GM12878 (cell line): ENCODE measurements at regions of chr17 and their contacts with region 1.

Region 1: DNA sequence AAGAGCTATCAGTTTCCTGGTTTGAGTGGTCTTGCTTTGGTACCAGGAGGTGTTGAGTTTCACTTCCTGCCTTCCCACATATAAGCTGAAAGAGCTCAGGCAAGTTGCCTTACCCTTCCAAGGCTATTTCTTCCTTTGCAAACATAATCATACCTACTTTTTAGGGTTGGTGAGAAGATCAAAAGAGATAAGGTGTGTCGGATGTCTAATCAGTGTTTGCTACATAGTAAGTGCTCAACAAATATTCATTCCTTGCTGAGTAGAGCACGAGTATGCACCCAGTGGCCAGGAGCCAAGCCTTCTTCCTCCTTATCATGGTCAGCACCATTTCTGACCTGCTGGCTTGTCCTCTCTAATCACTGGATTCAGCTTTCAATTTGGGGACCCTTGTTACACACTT is 12.7 kb upstream of the TMEM98 start:
- DNase-seq: no peak
- ATAC-seq: no peak
- H3K4me3 ChIP-seq: no peak overlapping the region
- H3K27ac ChIP-seq: no peak overlapping the region
- H3K4me1 ChIP-seq: no peaks in the 10 kb centered on the region
- H3K27me3 ChIP-seq: no peaks in the 10 kb centered on the region
- CTCF ChIP-seq: no peak
- EP300 ChIP-seq: no peak
- POLR2A ChIP-seq: no peak
- RAD21 ChIP-seq: no peak

Region 2: GRCh38 chr17:32903774-32904673 is 11.2 kb before region 1 on chr17:
- CTCF ChIA-PET with region 1: interaction called, 10 read pairs
- POLR2A ChIA-PET with region 1: no interaction called
- RAD21 ChIA-PET with region 1: no interaction called
- SMC1A ChIA-PET with region 1: interaction called, 7 read pairs
- in situ Hi-C with region 1: no loop called
- intact Hi-C with region 1: no loop called
- DNase-seq: no peak
- ATAC-seq: peak; percentile 84
- H3K4me3 ChIP-seq: no peak overlapping the region
- H3K27ac ChIP-seq: no peak overlapping the region
- H3K4me1 ChIP-seq: peaks cover 8% of the 10 kb centered on the region
- H3K27me3 ChIP-seq: no peaks in the 10 kb centered on the region
- CTCF ChIP-seq: no peak
- EP300 ChIP-seq: no peak
- POLR2A ChIP-seq: no peak
- RAD21 ChIP-seq: no peak

Region 3: DNA sequence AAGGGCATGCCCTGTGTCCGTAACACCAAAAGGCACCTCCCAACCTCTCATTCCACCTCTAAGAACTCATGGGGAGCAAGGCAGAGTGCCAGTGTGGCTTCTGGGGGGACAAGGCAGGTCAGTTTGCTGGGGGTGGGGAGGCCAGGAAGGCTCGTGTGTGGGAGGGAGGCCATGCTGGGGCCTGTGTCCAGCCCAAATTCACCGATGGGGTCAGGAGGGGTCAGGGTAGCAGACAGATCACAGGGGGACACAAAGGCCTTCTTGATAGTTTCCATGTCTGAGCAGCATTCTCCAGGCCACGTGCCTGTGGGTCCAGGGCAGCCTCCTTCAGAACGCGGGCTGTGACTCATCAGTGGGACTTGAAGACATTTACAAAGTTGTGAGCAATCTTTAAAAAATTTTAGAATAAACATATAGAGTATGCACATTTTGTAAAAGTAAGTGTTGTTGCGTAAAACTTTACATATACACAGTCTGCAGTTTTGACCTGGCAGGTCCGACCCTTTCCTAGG is 97.3 kb after region 1 on chr17:
- CTCF ChIA-PET with region 1: no interaction called
- POLR2A ChIA-PET with region 1: no interaction called
- RAD21 ChIA-PET with region 1: no interaction called
- SMC1A ChIA-PET with region 1: no interaction called
- in situ Hi-C with region 1: no loop called
- intact Hi-C with region 1: no loop called
- DNase-seq: no peak
- ATAC-seq: no peak
- H3K4me3 ChIP-seq: no peak overlapping the region
- H3K27ac ChIP-seq: no peak overlapping the region
- H3K4me1 ChIP-seq: no peaks in the 10 kb centered on the region
- H3K27me3 ChIP-seq: peaks cover 3% of the 10 kb centered on the region in 2 experiments; a peak in 2 of 4 replicates
- CTCF ChIP-seq: no peak
- EP300 ChIP-seq: no peak
- POLR2A ChIP-seq: no peak
- RAD21 ChIP-seq: no peak